Activated B cell treated with CpG ODN at 0.5 μM for 24 hours (primary cell): ENCODE measurements at regions of chr9 and their contacts with region 1.

Region 1: DNA sequence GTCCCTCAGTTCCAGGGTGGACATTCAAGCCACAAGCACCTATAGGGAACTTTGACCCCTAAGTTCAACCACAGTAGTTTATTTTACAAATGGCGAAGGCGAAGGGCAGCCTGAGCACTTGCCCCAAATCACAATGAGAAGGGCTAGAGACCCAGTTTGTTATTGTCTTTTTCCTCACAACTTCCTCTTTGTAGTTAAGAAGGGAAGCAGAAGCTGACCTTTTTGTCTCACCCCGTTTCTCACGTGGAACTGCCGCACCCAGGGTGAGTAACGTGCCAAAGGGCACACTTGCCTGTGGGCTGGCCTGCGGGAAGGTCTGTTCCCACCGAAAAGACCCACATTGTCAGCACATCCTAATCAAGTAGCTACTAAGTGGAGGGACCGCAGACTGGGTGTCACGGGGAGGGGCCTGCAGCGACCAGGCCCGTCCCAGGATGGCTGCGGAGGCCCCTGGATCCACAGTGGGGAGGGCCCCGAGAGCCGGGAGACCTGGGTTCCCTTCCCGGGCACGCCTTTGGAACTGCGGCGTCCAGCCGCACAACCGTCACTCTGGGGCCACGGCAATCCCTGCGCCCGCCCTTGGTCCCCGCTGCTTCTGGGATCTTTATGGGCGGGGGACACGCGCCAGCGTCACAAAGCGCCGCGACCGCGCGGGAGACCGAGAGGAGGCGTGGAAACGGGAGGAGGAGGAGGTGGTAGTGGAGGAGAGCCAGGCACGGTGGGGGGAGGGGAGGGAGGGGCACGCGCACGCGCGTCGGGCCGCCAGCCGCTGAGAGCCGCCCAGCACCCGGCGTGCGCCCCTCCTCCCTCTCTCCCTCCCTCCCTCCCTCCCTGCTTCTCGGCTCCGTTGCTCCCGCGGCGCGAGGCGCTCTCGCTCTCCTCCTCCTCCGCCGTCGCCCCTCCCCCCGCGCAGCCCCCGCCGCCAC is at the start of gene UBE2R2:
- DNase-seq: peak; percentile 79
- ATAC-seq: peak; percentile 72
- H3K4me3 Mint-ChIP-seq: peak within 1 kb of the TSS; percentile 90
- H3K27ac Mint-ChIP-seq: peak within 1 kb of the TSS; percentile 98
- H3K4me1 Mint-ChIP-seq: peaks cover 61% of the 10 kb centered on the region
- H3K27me3 Mint-ChIP-seq: no peaks in the 10 kb centered on the region
- CTCF ChIP-seq: no peak
- total RNA-seq, gene UBE2R2: 28.5 and 28.9 TPM in 2 replicates

Region 2: GRCh38 chr9:33835625-33836260 is 19.2 kb after region 1 on chr9:
- CTCF ChIA-PET with region 1: interaction called, 6 read pairs
- POLR2A ChIA-PET with region 1: interaction called, 9 read pairs
- intact Hi-C with region 1: loop called (anchors 2 kb)
- DNase-seq: no peak
- ATAC-seq: no peak
- H3K4me3 Mint-ChIP-seq: no peak overlapping the region
- H3K27ac Mint-ChIP-seq: no peak overlapping the region
- H3K4me1 Mint-ChIP-seq: peaks cover 51% of the 10 kb centered on the region
- H3K27me3 Mint-ChIP-seq: no peaks in the 10 kb centered on the region
- CTCF ChIP-seq: no peak

Region 3: GRCh38 chr9:33924978-33925797 is 108.6 kb after region 1 on chr9:
- CTCF ChIA-PET with region 1: interaction called, 8 read pairs
- POLR2A ChIA-PET with region 1: no interaction called
- intact Hi-C with region 1: loop called (anchors 5 kb)
- DNase-seq: no peak
- ATAC-seq: peak; percentile 31
- H3K4me3 Mint-ChIP-seq: no peak overlapping the region
- H3K27ac Mint-ChIP-seq: no peak overlapping the region
- H3K4me1 Mint-ChIP-seq: no peaks in the 10 kb centered on the region
- H3K27me3 Mint-ChIP-seq: no peaks in the 10 kb centered on the region
- CTCF ChIP-seq: no peak

Region 4: GRCh38 chr9:34126207-34127034 is 309.8 kb after region 1 on chr9 and contains the start of gene DCAF12:
- CTCF ChIA-PET with region 1: no interaction called
- POLR2A ChIA-PET with region 1: no interaction called
- intact Hi-C with region 1: loop called (anchors 5 kb)
- DNase-seq: peak; percentile 71
- ATAC-seq: peak; percentile 81
- H3K4me3 Mint-ChIP-seq: peak within 1 kb of the TSS; percentile 90
- H3K27ac Mint-ChIP-seq: peak within 1 kb of the TSS; percentile 72
- H3K4me1 Mint-ChIP-seq: peaks cover 52% of the 10 kb centered on the region
- H3K27me3 Mint-ChIP-seq: peaks cover 39% of the 10 kb centered on the region
- CTCF ChIP-seq: no peak
- total RNA-seq, gene DCAF12: 3.8 and 5.9 TPM in 2 replicates

Region 5: GRCh38 chr9:34458013-34458958 is 641.7 kb after region 1 on chr9 and contains the starts of genes DNAI1 and FAM219A:
- CTCF ChIA-PET with region 1: no interaction called
- POLR2A ChIA-PET with region 1: no interaction called
- intact Hi-C with region 1: loop called (anchors 1 kb)
- DNase-seq: peak; percentile 99
- ATAC-seq: peak; percentile 92
- H3K4me3 Mint-ChIP-seq: peak within 1 kb of the TSS; percentile 90
- H3K27ac Mint-ChIP-seq: peak within 1 kb of the TSS; percentile 68
- H3K4me1 Mint-ChIP-seq: peaks cover 34% of the 10 kb centered on the region
- H3K27me3 Mint-ChIP-seq: peaks cover 12% of the 10 kb centered on the region
- CTCF ChIP-seq: no peak
- total RNA-seq, gene DNAI1: not detected in 2 replicates
- total RNA-seq, gene FAM219A: 13.5 and 16.9 TPM in 2 replicates

Region 6: DNA sequence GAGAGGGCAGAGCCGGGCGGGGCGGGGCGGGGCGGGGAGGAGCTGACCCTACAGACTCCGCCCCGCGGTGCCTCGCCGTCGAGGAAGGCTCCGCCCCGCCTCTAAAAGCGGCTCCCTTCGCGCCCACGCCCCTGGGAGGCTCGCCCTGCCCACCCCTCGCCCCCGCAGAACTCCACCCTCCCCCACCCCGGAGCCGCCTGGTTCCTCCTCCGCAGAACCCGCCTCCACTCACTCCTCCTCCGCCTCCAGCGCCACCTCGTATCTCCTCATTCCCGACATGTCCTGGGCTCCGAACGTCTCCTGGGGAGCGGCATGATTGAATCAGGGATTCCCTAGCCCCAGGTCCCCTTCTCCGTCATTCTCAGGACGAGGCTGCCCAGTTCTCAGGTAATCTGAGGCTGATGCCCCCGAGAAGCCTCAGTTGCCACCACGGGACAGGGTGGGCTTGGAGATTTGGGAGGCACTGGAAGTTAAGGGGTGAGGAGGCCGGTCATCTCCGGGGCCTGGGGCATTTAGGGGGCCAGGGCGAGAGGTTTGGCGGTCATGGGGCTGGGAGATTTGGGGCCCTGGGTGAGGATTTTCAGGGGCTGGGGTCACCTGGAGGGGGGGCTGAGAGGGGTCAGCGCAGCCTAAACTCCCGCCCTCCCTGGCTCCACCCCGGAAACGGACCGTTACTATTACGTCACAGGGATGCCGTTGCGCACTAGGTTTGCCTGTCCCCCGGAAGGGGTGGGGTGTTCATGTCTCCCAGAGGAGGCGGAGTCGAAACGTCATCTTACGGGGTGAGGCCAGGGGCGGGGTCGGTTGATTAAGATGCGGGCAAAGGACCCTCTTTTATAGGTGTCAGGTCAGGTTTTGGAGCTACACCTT is 849.0 kb after region 1 on chr9:
- CTCF ChIA-PET with region 1: no interaction called
- POLR2A ChIA-PET with region 1: interaction called, 3 read pairs
- intact Hi-C with region 1: loop called (anchors 1 kb)
- DNase-seq: peak; percentile 75
- ATAC-seq: peak; percentile 90
- H3K4me3 Mint-ChIP-seq: peak overlapping the region; percentile 88
- H3K27ac Mint-ChIP-seq: peak overlapping the region; percentile 87
- H3K4me1 Mint-ChIP-seq: peaks cover 11% of the 10 kb centered on the region
- H3K27me3 Mint-ChIP-seq: no peaks in the 10 kb centered on the region
- CTCF ChIP-seq: no peak